Colonic mucosa (tissue), 4 donors: ENCODE measurements at regions of chr14 and their contacts with region 1.

Region 1: DNA sequence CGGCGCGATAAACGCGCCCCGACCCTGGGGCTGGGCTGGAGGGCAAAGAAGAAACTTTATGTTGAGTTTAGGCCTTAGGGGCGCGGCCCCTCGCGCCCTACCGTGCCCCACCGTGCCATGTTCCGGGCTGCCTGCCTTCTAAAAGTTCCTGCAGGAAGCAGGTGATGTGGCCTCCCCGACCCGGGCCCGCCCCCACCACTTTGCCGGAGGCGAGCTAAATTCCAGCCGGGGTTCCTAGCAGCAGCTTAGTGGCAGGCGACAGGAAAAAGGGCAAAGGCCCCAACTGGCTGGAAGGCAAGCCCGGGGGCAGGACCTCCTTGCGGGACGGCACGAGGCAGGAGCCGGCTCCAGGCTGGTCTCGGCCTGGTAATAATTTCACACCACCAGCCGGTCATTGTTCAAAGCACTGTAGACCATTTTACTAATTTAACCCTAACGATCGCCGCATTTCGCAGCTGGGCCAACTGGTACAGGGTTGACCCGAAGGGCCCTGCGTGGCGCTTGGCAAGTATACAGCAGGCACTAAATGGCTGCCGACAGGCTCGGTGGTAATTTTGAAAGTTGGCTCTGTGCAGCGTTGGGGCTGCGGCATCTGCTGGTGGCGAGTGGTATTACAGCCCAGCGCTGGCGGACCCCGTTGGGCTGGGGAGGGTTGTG is 895 bp upstream of the CCDC88C start:
- DNase-seq: peak; percentile 87
- H3K4me3 ChIP-seq: peak overlapping the region; percentile 39
- H3K27ac ChIP-seq: no peak overlapping the region
- H3K4me1 ChIP-seq: peaks cover 10% of the 10 kb centered on the region
- H3K27me3 ChIP-seq: no peaks in the 10 kb centered on the region
- CTCF ChIP-seq: peak; percentile 99

Region 2: DNA sequence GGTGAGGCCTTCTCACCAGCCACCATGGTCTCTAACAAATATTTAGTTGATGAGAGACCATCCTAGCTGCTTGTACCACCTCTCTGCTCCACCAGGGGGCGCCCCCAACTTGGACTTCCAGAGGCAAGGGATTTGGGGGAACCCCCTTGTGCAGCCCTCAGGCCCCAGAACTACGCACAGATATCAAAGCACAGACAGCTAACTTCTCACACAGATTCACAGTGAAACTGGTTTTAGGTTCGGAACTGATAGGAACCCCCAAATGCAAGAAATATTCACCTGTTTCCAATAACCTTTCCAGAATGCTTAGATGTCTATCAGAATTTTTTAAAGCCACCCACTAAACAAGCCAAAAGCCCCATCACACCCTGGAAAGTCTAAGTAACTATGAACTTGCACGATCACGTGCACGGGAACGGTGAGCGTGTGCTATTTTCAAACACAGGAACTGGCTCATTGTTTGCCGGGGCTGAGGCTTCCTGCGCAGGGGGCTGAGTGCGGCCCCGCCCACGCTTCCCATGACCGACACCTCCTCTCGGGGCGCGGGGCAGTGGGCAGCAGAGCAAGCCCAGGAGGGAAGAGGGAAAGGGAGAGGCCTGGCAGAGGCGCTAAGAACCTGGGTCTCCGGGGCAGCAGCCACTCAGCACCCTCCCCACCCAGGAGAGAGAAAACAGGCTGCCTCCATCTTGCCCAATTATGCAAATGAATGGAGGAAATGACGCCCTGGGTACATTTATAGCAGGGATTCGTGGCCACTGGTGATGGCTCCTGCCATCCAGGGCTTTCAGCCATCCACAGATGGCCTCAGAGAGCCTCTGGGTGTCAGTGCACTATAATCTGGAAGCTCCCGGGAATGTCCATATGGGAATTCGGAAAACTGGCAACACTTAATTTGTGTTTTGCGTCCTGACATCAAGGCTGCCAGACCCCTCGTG is 94.6 kb before region 1 on chr14:
- intact Hi-C with region 1: loop called (anchors 1 kb)
- DNase-seq: peak; percentile 91
- H3K4me3 ChIP-seq: no peak overlapping the region
- H3K27ac ChIP-seq: peak overlapping the region; percentile 62
- H3K4me1 ChIP-seq: no peaks in the 10 kb centered on the region
- H3K27me3 ChIP-seq: no peaks in the 10 kb centered on the region
- CTCF ChIP-seq: peak; percentile 98

Region 3: GRCh38 chr14:91367173-91368171 is 51.0 kb before region 1 on chr14:
- intact Hi-C with region 1: no loop called
- DNase-seq: no peak
- H3K4me3 ChIP-seq: no peak overlapping the region
- H3K27ac ChIP-seq: no peak overlapping the region
- H3K4me1 ChIP-seq: peaks cover 5% of the 10 kb centered on the region
- H3K27me3 ChIP-seq: no peaks in the 10 kb centered on the region
- CTCF ChIP-seq: no peak

Region 4: DNA sequence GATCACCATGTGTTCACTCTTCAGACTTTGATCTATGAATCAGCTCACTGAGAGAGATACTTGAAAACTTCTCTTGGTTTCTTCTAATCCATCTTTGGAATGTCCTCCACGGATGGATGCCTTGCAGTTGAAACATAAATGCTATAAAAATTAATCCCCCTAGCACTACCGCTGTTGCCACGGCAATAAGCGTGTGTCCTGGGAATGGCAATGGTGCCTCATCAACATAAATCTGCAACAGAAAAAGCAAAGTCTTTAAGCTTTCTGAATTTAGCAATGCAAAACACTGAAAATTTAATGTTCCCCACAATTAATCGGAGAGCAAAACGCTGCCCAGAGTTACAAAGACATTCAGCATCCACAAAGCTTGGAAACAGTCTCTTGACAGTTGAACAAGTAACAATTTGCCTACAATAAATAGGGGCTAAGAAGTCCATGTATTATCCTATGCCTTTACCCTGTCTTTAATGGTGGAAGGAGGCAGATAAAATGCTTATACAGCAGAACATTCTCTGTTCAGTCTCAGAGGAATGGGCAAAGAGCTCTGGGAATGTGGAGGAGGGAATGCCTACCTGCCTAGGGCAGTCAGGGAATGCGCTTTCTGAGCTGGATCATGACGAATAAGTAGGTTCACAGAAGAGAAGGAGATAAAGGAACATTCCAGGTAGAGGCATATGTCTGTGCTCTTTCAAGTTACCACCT is 162.5 kb after region 1 on chr14:
- intact Hi-C with region 1: no loop called
- DNase-seq: no peak
- H3K4me3 ChIP-seq: no peak overlapping the region
- H3K27ac ChIP-seq: no peak overlapping the region
- H3K4me1 ChIP-seq: no peaks in the 10 kb centered on the region
- H3K27me3 ChIP-seq: no peaks in the 10 kb centered on the region
- CTCF ChIP-seq: no peak